Endothelial cell of umbilical vein (primary cell): ENCODE measurements at regions of chr11 and their contacts with region 1.

Region 1: GRCh38 chr11:35822815-35823495 is 120.9 kb upstream of the LDLRAD3 start:
- DNase-seq: no peak
- H3K4me3 ChIP-seq: no peak overlapping the region
- H3K27ac ChIP-seq: no peak overlapping the region
- H3K4me1 ChIP-seq: peaks cover 8% of the 10 kb centered on the region
- H3K27me3 ChIP-seq: no peaks in the 10 kb centered on the region
- CTCF ChIP-seq: no peak
- POLR2A ChIP-seq: no peak

Region 2: DNA sequence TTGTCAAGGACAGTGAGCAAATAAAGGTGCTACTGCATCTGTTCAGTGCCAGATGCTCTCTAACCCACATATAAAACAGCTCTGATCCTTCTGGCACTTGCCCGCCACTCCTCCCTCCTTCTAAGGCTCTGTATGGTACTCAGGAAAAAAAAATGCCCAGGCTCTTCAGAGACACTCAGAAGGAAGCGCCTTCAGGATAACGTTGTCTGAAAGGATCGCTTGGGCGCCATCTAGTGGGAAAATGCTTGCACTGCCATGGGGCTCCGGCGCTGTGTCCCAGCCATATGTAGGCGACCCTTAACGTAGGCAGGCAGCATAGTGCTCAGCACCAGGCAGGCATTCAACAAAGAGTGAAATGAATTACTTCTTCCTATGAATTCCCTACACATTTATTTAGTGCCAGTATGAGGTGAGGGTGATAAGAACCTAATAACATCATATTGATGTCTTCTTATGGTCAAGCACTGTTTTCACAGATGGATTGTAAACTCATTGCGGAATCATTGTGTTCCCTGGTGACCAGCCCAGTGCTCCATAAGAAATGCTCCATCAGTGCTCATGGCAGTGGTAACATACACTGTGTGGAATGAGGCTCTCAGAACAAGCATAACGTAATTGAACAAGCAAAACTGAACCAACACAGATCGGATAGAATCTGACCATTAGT is 337.2 kb before region 1 on chr11:
- CTCF ChIA-PET with region 1: interaction called, 5 read pairs
- POLR2A ChIA-PET with region 1: no interaction called
- dilution Hi-C with region 1: no loop called
- intact Hi-C with region 1: loop called (anchors 1 kb)
- DNase-seq: peak; percentile 79
- H3K4me3 ChIP-seq: no peak overlapping the region
- H3K27ac ChIP-seq: no peak overlapping the region
- H3K4me1 ChIP-seq: no peaks in the 10 kb centered on the region
- H3K27me3 ChIP-seq: peaks cover 8 to 10% of the 10 kb centered on the region in 2 experiments
- CTCF ChIP-seq: peak; percentile 85 to 92
- POLR2A ChIP-seq: no peak

Region 3: DNA sequence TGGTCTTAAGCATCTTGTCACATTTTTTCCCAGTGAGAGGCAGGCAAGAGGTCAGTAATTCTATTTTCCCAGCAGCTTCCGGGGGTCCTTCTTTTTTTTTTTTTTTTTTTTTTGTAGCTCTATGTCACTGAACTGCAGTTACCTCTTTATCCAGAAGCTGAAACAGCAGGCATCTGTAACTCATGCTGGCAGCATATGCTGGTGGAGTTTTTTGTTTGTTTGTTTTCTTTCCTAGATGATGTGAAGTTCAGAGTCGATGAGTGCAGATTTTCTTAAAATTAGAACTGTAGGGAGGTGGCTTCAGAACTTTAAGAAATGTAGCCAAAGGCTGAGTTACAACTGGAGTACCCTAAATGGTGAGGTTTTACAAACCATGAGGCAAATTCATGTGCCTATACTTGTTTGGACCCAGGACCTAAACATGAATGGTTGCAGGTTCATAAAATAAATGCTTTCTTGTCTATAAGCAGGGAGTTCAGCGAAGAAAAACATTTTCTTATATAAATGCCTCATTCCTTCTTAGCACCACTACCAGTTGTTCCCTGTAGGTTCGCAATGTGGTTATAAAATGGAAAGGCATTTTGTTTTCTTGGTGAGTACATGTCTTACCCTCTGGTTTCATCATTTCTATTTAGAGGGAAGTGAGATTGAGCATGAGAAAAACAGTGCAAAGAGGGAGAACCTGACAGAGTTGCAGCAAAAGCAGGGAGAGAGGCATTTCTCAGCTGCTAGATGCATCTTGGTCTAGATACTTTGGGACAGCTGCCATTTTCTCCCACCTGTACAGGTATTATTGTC is 76.4 kb before region 1 on chr11:
- CTCF ChIA-PET with region 1: interaction called, 17 read pairs
- POLR2A ChIA-PET with region 1: no interaction called
- dilution Hi-C with region 1: no loop called
- intact Hi-C with region 1: no loop called
- DNase-seq: no peak
- H3K4me3 ChIP-seq: no peak overlapping the region
- H3K27ac ChIP-seq: no peak overlapping the region
- H3K4me1 ChIP-seq: peaks cover 6% of the 10 kb centered on the region
- H3K27me3 ChIP-seq: no peaks in the 10 kb centered on the region
- CTCF ChIP-seq: no peak
- POLR2A ChIP-seq: no peak

Region 4: DNA sequence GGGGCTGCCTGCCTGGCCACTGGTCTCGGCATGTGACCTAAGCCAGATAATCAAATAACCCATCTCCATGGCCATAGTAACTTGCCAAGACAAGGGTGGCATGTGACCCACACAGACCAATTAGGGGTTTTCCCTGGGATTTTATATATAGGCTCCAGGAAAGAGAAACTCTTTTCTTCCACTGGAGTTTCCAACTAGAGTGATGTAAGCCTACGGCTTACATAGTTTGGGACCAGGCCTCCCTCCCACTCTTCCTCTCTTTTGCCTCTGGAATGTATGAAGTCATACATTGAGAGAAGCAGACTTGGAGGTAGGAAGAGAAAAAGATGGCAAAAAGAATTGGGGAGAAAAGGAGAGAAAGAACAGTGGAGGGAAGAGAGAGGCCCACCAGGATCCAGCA is 36.3 kb after region 1 on chr11:
- CTCF ChIA-PET with region 1: interaction called, 15 read pairs
- POLR2A ChIA-PET with region 1: no interaction called
- dilution Hi-C with region 1: no loop called
- intact Hi-C with region 1: no loop called
- DNase-seq: no peak
- H3K4me3 ChIP-seq: no peak overlapping the region
- H3K27ac ChIP-seq: no peak overlapping the region
- H3K4me1 ChIP-seq: no peaks in the 10 kb centered on the region
- H3K27me3 ChIP-seq: no peaks in the 10 kb centered on the region
- CTCF ChIP-seq: no peak
- POLR2A ChIP-seq: no peak

Region 5: DNA sequence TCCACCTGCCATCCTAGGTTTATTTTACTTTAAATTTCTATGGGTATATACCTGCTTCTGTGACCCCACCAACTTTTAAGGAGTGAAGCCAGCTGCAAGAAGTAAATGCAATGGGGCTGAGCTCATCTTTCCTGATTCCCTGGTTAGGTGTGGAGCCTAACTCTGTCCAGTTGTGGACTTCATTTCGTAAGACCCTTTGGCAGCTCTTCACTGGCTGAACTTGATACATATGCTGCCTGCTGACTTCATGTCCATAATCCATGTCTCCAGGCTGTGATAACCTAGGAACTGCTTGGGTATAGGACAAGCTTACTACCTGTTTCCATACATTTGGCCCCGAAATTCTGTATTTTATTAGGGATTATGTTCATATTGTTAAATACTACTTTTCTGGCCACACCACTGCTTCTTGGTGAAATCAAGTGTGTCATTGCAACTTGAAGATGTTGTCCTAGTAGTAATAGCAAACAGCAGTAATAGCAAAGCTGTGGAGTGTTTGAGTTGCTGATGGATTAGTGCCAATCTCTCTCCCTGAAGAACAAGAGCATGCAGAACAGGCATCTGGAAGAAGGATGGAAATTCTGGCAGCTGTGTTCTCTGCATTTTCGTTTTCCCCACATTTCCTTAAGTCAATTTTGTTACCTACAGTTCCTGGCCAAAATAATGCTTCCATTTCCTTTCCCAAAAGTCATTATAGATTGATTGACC is 152.1 kb after region 1 on chr11:
- CTCF ChIA-PET with region 1: interaction called, 11 read pairs
- POLR2A ChIA-PET with region 1: no interaction called
- dilution Hi-C with region 1: no loop called
- intact Hi-C with region 1: no loop called
- DNase-seq: no peak
- H3K4me3 ChIP-seq: no peak overlapping the region
- H3K27ac ChIP-seq: no peak overlapping the region
- H3K4me1 ChIP-seq: peaks cover 10% of the 10 kb centered on the region
- H3K27me3 ChIP-seq: no peaks in the 10 kb centered on the region
- CTCF ChIP-seq: no peak
- POLR2A ChIP-seq: no peak

Region 6: GRCh38 chr11:36062796-36063365 is 239.9 kb after region 1 on chr11:
- CTCF ChIA-PET with region 1: interaction called, 98 read pairs
- POLR2A ChIA-PET with region 1: no interaction called
- dilution Hi-C with region 1: no loop called
- intact Hi-C with region 1: no loop called
- DNase-seq: peak; percentile 43
- H3K4me3 ChIP-seq: no peak overlapping the region
- H3K27ac ChIP-seq: no peak overlapping the region
- H3K4me1 ChIP-seq: peaks cover 6% of the 10 kb centered on the region
- H3K27me3 ChIP-seq: no peaks in the 10 kb centered on the region
- CTCF ChIP-seq: no peak
- POLR2A ChIP-seq: no peak

Region 7: DNA sequence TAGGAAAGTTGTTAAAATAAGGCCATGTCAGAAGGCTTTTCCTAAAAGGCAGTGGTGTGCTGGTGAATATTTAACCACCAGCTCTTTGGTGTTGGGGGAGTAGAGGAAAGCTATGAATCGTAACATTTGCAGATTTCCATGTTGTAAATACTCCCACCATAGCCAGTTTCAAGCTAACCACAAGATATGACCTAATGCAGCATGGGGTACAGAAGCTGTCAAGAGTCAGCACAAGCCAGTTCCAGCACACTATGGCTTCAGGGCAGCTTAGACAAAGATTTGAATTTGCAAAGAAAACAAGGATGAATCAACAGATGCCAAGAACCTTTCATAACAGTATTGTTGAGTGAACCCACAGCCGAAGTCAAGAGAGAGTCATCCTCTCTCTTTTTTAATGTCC is 426.3 kb after region 1 on chr11:
- CTCF ChIA-PET with region 1: interaction called, 16 read pairs
- POLR2A ChIA-PET with region 1: no interaction called
- dilution Hi-C with region 1: loop called (anchors 25 kb)
- intact Hi-C with region 1: no loop called
- DNase-seq: no peak
- H3K4me3 ChIP-seq: no peak overlapping the region
- H3K27ac ChIP-seq: no peak overlapping the region
- H3K4me1 ChIP-seq: no peaks in the 10 kb centered on the region
- H3K27me3 ChIP-seq: peaks cover 6 to 13% of the 10 kb centered on the region in 2 experiments
- CTCF ChIP-seq: no peak
- POLR2A ChIP-seq: no peak